HepG2 (cell line): ENCODE measurements at regions of chr5 and their contacts with region 1.

Region 1: GRCh38 chr5:110159202-110159601 is 469.5 kb downstream of the MAN2A1 start:
- DNase-seq: no peak
- ATAC-seq: no peak
- H3K4me3 ChIP-seq: no peak overlapping the region
- H3K27ac ChIP-seq: no peak overlapping the region
- H3K4me1 ChIP-seq: no peaks in the 10 kb centered on the region
- H3K27me3 ChIP-seq: no peaks in the 10 kb centered on the region
- CTCF ChIP-seq: no peak
- EP300 ChIP-seq: no peak
- POLR2A ChIP-seq: no peak
- RAD21 ChIP-seq: no peak

Region 2: DNA sequence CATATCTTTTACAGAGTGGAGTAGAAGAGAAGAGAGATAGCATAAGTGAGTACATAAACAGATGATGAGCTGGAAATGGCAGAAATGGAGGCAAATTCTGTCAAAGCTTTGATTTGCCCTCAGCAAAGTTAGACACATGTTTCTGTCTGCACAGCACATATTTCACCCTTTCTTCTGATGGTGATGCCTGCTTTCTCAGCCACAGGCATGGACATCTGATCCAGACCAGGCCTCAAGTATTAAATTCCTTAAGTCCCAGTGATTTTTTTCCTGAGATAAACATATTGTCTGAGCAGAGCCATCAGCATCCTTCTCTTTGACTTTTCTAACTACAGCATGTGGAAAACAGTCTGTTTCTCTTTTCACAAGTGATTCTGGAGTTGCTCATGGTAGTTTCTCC is 59.6 kb before region 1 on chr5:
- CTCF ChIA-PET with region 1: no interaction called
- POLR2A ChIA-PET with region 1: no interaction called
- in situ Hi-C with region 1: no loop called
- intact Hi-C with region 1: loop called (anchors 1 kb)
- DNase-seq: no peak
- ATAC-seq: no peak
- H3K4me3 ChIP-seq: no peak overlapping the region
- H3K27ac ChIP-seq: no peak overlapping the region
- H3K4me1 ChIP-seq: peaks cover 8% of the 10 kb centered on the region
- H3K27me3 ChIP-seq: no peaks in the 10 kb centered on the region
- CTCF ChIP-seq: no peak
- EP300 ChIP-seq: no peak
- POLR2A ChIP-seq: no peak
- RAD21 ChIP-seq: no peak

Region 3: GRCh38 chr5:110880413-110880812 is 721.2 kb after region 1 on chr5:
- CTCF ChIA-PET with region 1: no interaction called
- POLR2A ChIA-PET with region 1: no interaction called
- in situ Hi-C with region 1: no loop called
- intact Hi-C with region 1: no loop called
- DNase-seq: no peak
- ATAC-seq: no peak
- H3K4me3 ChIP-seq: no peak overlapping the region
- H3K27ac ChIP-seq: no peak overlapping the region
- H3K4me1 ChIP-seq: no peaks in the 10 kb centered on the region
- H3K27me3 ChIP-seq: no peaks in the 10 kb centered on the region
- CTCF ChIP-seq: no peak
- EP300 ChIP-seq: no peak
- POLR2A ChIP-seq: no peak
- RAD21 ChIP-seq: no peak